ENCODE measurements at regions of chr6 and their contacts with region 1.

Region 1: GRCh38 chr6:29737707-29738630 is 14.7 kb downstream of the HLA-F start:
- DNase-seq: no peak
- ATAC-seq: peak; percentile 75

Region 2: DNA sequence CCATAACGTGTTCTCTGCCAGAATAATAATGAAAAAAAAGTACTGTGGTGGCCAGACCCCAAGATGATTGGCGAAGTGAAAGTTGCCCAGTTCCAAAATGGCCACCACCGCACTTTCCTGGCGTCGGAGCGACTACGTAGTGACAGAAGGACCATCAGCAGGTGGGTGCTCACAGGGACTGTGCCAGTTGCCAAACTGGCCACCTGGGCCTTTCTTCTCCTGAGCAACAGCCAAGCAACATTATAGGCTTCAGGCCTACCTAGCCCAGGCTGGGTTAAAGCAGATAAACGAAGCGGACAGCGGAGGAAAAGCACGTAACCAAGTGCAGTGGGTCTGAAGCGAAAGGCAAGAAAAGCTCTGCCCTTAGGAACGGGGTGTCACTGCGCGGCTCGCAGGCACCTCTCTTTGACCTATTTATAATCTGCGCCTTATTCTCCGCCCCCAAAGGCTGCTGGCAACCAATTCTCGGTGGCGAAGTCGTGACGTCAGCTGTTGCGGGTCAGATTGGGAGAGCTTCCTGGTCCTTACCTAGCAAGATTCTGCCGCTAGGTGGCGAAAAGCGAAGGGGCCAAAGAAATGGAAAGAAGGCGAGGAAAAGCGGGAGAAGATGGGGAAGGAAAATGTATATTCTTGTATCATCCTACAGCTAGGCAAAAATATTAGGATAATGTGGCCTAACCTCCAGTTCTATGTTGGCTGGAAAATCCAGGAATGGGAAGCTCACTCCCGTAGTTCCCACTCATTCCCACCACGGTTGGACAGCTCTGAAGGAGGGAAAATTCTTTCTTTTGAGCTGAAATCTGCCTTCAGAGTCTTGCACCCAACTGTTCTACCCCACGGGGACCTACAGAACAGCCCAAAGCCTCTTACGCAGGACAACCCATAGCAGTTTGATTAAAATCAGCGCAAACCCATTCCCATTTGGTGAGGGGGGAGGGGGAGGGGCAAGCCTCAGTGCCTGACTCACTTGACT is 88.0 kb before region 1 on chr6:
- intact Hi-C with region 1: no loop called
- DNase-seq: peak; percentile 98
- ATAC-seq: peak; percentile 98

Region 3: GRCh38 chr6:29752451-29753308 is 14.7 kb after region 1 on chr6:
- intact Hi-C with region 1: loop called (anchors 2 kb)
- DNase-seq: peak; percentile 96
- ATAC-seq: peak; percentile 87

Region 4: DNA sequence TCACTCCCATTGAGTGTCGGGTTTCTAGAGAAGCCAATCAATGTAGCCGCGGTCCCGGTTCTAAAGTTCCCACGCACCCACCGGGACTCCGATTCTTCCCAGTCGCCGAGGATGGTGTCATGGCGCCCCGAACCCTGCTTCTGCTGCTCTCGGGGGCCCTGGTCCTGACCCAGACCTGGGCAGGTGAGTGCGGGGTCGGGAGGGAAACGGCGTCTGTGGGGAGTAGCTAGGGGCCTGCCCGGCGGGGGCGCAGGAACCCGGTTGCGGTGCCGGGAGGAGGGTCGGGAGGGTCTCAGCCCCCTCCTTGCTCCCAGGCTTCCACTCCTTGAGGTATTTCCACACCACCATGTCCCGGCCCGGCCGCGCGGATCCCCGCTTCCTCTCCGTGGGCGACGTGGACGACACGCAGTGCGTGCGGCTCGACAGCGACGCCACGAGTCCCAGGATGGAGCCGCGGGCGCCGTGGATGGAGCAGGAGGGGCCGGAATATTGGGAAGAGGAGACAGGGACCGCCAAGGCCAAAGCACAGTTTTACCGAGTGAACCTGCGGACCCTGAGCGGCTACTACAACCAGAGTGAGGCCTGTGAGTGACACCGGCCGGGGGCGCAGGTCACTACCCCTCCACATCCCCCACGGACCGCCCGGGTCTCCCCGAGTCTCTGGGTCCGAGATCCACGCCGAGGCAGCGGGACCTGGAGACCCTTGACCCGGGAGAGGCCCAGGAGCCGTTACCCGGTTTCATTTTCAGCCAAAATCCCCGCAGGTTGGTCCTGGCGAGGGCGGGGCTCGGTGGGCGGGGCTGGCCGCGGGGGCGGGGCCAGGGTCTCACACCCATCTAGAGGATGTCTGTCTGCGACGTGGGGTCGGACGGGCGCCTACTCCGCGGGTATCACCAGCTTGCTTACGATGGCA is 54.4 kb after region 1 on chr6:
- intact Hi-C with region 1: loop called (anchors 2 kb)
- DNase-seq: peak; percentile 88
- ATAC-seq: peak; percentile 96

Region 5: DNA sequence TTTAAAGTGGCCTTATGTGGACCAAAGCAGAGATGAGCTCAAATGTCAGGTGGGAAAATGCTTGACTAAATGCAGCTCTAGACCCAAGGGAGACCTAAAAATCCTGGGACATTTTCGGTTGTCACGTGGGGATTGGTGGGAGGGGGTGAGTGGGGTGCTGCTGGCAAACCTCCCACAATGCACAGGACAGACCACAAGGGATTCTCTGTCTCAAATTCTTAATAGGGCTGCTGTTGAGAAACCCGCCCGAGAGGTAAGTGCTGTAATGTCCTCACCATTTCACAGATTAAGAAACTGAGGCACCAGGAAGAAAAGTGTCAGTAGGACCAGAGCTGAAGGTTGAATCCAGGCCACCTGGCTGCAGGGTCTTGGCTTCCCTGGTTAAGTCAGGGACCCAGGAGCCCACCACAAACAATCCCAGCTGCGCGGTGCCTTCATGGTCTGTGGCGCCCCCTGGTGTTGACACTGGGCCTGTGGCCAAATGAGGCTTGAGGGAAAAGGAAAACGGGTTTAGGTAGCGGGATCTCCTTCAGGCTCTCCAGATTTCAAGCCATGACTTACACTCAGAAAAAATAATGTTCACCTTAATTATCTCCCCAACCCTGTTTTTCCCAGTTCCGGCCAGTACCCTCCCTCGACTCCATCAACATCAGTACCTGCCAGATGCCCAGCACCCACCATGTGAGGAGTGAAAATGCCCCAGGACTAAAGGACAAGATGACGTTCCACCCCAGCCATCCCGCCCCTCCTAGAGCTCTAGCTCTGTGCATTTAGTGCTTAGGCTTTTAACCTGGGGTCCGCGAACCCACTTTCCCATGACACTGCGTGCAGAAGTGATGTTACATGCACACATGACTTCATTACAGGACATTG is 96.8 kb after region 1 on chr6:
- intact Hi-C with region 1: loop called (anchors 1 kb)
- DNase-seq: peak; percentile 72
- ATAC-seq: peak; percentile 48